Head of caudate nucleus (tissue), 42 donors: ENCODE measurements at regions of chr19 and their contacts with region 1.

Region 1: GRCh38 chr19:15418588-15419412 is at the start of gene AKAP8L:
- DNase-seq: peak; percentile 91 to 100 (median 97)

Region 2: DNA sequence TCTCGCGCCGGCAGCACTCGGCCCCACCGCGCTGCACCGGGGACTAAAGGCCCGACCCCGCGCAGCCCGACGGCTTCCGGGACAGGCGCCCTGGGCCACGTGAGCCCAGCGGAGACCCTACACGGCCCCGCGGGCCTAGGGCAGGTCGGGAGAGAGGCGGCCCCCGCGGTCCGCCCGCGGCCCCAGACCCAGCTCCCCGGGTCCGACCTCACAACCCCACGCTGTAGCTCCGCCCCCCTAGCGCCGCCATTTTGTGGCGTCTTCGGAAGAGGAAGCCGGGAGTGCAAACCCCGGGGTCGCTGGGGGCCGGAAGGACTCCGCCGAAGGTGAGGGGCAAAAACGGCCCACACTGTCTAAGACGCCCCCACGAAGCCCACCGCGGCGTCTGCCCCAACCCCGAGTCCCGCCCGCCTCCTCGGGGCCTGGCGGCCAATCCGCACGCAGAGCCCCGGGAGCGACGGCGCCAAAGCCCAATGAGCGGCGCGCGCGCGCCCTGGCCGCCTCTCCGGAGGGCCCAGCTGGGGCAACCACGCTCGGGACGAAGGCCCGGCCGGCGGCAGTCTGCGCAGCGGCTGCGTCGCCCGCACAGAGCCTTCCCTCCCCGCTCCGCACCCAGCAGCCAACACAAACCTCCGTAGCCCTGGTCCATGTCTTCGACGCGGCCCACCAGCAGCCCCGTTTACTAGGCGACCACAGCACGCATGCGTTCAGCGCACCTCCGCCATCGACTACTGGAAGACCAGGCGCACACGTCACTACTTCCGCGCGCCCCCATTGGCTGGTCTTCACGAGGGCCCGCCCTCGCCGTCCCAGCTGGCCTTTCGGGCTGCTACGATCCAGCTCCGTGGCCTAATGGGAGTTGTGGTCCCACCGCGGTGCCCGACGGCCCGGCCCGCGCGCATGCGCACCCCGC is 39.5 kb before region 1 on chr19 and contains the start of gene AKAP8:
- intact Hi-C with region 1: loop called (anchors 5 kb)
- DNase-seq: peak; percentile 96 to 99 (median 98)